ENCODE measurements at regions of chr10 and their contacts with region 1.

Region 1: DNA sequence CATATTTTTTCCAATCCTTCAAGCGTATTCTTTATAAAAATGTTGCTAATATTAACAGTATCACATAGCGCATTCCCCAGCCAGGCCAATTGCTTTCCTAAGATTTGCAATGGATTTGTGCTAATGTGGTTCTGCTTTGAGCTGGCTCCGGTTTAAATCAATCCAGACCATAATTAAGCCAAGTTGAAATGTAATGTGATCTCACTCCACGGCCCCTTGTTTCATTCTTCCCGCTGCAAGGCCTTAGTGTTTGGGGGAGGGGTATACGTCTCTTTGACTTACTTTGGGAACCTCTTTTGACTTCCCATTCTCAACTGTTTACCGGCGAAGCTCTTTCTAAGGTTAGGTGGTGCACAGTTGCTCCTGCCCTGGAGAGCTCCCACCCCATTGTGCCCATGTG is 86.4 kb downstream of the PRPF18 start:
- DNase-seq: no peak
- ATAC-seq: no peak
- H3K4me3 ChIP-seq: no peak overlapping the region
- H3K27ac ChIP-seq: no peak overlapping the region
- H3K4me1 ChIP-seq: peaks cover 0 to 23% (median 9%) of the 10 kb centered on the region in 12 donors
- H3K27me3 ChIP-seq: no peaks in the 10 kb centered on the region
- CTCF ChIP-seq: no peak
- POLR2A ChIP-seq: no peak

Region 2: GRCh38 chr10:13698217-13698616 is 25.1 kb after region 1 on chr10:
- intact Hi-C with region 1: loop called in 1 of 10 experiments (anchors 5 kb)
- DNase-seq: peak in 2 of 5 donors; percentile 44 to 77
- ATAC-seq: peak; percentile 88 to 91 (median 90)
- H3K4me3 ChIP-seq: no peak overlapping the region
- H3K27ac ChIP-seq: peak overlapping the region in 11 of 12 donors; percentile 23 to 78 (median 61)
- H3K4me1 ChIP-seq: peaks cover 0 to 73% (median 31%) of the 10 kb centered on the region in 12 donors
- H3K27me3 ChIP-seq: no peaks in the 10 kb centered on the region
- CTCF ChIP-seq: no peak
- POLR2A ChIP-seq: no peak

Region 3: GRCh38 chr10:13707156-13707881 is 34.2 kb after region 1 on chr10:
- intact Hi-C with region 1: loop called in 4 of 10 experiments (anchors 5 to 10 kb)
- DNase-seq: peak; percentile 86 to 93 (median 91)
- ATAC-seq: peak; percentile 81 to 92 (median 92)
- H3K4me3 ChIP-seq: peak overlapping the region; percentile 16 to 78 (median 63)
- H3K27ac ChIP-seq: peak overlapping the region; percentile 60 to 91 (median 82)
- H3K4me1 ChIP-seq: peaks cover 4 to 92% (median 58%) of the 10 kb centered on the region in 12 donors
- H3K27me3 ChIP-seq: no peaks in the 10 kb centered on the region
- CTCF ChIP-seq: peak in 3 of 12 donors; percentile 4 to 18 (median 8)
- POLR2A ChIP-seq: peak in 1 of 2 donors; percentile 31

Region 4: GRCh38 chr10:13717931-13718772 is 45.0 kb after region 1 on chr10:
- intact Hi-C with region 1: loop called in 3 of 10 experiments (anchors 5 to 10 kb)
- DNase-seq: peak; percentile 77 to 90 (median 82)
- ATAC-seq: peak; percentile 72 to 88 (median 80)
- H3K4me3 ChIP-seq: peak overlapping the region in 10 of 12 donors; percentile 22 to 48 (median 38)
- H3K27ac ChIP-seq: peak overlapping the region; percentile 25 to 86 (median 70)
- H3K4me1 ChIP-seq: peaks cover 0 to 47% (median 23%) of the 10 kb centered on the region in 12 donors
- H3K27me3 ChIP-seq: no peaks in the 10 kb centered on the region
- CTCF ChIP-seq: no peak
- POLR2A ChIP-seq: no peak

Region 5: GRCh38 chr10:13795653-13796555 is 122.7 kb after region 1 on chr10:
- intact Hi-C with region 1: no loop called
- DNase-seq: no peak
- ATAC-seq: no peak
- H3K4me3 ChIP-seq: no peak overlapping the region
- H3K27ac ChIP-seq: no peak overlapping the region
- H3K4me1 ChIP-seq: peaks cover 0 to 24% (median 7%) of the 10 kb centered on the region in 12 donors
- H3K27me3 ChIP-seq: no peaks in the 10 kb centered on the region
- CTCF ChIP-seq: no peak
- POLR2A ChIP-seq: no peak

Measured in heart left ventricle (tissue), 16 donors.